ENCODE measurements at regions of chr3 and their contacts with region 1.

Region 1: GRCh38 chr3:133384331-133385027 is 15.4 kb upstream of the BFSP2 start:
- DNase-seq: peak; percentile 40 to 81
- ATAC-seq: peak; percentile 85 to 97 (median 92)
- H3K4me3 ChIP-seq: no peak overlapping the region
- H3K27ac ChIP-seq: no peak overlapping the region
- H3K4me1 ChIP-seq: peaks cover 7% of the 10 kb centered on the region
- H3K27me3 ChIP-seq: no peaks in the 10 kb centered on the region
- CTCF ChIP-seq: peak; percentile 82

Region 2: GRCh38 chr3:132722164-132723024 is 662.1 kb before region 1 on chr3 and contains the start of gene NPHP3:
- intact Hi-C with region 1: loop called in 1 of 2 experiments (anchors 2 kb)
- DNase-seq: peak; percentile 98 to 99
- ATAC-seq: peak; percentile 88 to 93 (median 92)
- H3K4me3 ChIP-seq: peak within 1 kb of the TSS; percentile 79
- H3K27ac ChIP-seq: peak within 1 kb of the TSS; percentile 91
- H3K4me1 ChIP-seq: peaks cover 30% of the 10 kb centered on the region
- H3K27me3 ChIP-seq: no peaks in the 10 kb centered on the region
- CTCF ChIP-seq: no peak
- total RNA-seq, gene NPHP3: 6.9 to 9.1 (median 8.1) TPM

Region 3: DNA sequence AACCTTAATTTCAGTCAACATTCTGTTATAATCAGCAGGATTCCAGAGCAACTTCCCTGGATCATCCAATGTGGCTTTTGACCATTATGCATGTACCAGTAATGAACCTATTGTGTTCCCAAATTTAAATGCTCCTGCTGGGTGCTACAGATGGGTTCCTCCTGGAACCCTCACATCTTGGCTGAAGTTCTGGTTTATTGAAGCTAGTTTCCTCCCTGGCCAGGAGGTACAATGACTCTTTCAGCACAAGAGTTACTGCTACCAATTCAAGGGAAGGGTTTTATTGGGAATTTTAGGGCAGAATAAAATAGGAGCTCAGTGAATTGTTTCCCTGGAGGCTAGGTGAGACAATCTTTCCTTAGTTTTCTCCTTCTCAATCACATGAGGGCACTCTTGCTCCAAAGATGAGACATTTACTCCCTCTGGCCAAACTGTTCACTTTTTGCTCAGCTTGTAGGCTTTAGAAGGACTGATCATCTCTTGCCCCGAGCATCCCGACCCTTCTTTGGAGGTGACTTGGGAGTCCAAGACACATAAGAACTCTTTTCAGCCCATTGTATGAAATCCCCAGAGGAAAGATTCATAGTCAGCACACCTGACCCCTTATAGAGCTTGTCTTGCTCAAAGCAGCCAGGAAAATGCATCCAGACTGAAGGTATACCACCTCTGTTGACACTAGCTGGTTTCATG is 653.4 kb before region 1 on chr3:
- intact Hi-C with region 1: loop called (anchors 2 kb)
- DNase-seq: no peak
- ATAC-seq: peak; percentile 69 to 91 (median 74)
- H3K4me3 ChIP-seq: no peak overlapping the region
- H3K27ac ChIP-seq: no peak overlapping the region
- H3K4me1 ChIP-seq: no peaks in the 10 kb centered on the region
- H3K27me3 ChIP-seq: no peaks in the 10 kb centered on the region
- CTCF ChIP-seq: peak; percentile 53

Region 4: DNA sequence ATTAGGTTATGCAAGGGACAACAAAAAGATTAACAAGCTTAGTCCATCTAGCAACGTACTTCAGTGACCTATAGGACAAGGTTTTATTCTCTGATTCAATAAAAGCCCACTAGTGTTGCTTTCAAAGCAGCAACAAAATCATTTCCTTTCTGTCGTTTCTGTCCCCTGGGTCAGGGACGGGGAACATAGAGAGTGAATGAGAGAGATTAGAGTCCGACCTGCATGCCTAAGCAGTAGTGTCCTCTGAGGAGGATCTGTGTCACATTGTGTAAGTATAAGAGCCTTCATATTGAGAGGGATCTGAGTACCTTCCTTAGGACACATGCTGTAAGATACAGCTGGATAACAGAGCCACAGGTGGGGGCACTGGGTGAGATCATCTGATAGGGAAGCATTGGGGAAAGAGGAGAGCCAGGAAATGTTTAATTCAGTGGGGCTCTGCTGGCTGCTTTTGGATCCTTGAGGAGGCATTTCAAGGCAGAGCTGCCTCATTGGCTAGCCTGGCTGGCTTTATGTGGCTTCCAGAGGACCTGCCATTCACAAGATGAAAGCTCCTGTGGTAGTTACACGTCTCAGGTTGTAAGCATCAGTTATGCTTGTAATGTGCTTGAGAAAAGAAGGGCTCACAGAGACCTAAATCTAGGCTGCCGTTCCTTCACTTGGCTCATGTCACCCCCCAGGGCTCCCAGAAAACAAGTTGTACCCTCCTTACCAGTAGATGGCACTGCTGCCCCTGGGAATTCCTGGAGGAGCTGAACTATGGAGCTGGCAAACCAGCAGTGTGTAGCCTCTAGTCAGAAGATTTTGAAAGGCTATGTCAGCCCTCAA is 343.6 kb before region 1 on chr3:
- intact Hi-C with region 1: loop called (anchors 2 kb)
- DNase-seq: peak; percentile 67 to 81
- ATAC-seq: peak; percentile 74 to 83 (median 80)
- H3K4me3 ChIP-seq: peak overlapping the region; percentile 19
- H3K27ac ChIP-seq: peak overlapping the region; percentile 44
- H3K4me1 ChIP-seq: peaks cover 9% of the 10 kb centered on the region
- H3K27me3 ChIP-seq: no peaks in the 10 kb centered on the region
- CTCF ChIP-seq: peak; percentile 76

Region 5: DNA sequence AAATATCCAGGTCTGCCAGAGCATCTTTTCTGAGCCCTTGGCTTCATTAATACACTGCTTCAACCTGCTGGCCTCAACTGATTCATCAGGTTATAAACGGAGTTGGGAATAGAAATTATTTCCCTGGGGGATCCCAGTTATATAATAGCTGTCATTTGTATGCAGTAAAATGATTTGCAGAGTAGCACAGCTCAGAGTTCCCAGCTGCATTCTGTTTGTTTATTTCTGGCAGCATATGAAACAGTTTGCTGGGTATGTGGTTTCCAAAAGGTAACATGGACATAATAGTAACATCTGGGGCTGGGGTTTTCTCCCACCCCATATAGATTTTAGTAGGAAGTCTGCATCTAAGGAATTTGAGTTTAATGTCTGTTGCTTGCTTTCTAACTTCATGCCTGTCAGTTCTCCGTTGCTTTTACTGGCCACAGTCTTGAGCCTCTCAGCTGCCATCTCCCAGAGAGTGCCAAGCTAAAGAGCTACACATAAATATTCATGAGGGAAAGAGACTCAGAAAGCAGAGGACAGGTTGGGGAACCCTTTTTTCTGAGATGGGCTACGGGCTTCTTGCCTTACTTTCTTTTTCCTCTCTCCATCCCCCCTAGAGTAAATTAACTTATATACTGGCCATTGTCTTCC is 221.7 kb before region 1 on chr3:
- intact Hi-C with region 1: no loop called
- DNase-seq: no peak
- ATAC-seq: no peak
- H3K4me3 ChIP-seq: no peak overlapping the region
- H3K27ac ChIP-seq: no peak overlapping the region
- H3K4me1 ChIP-seq: no peaks in the 10 kb centered on the region
- H3K27me3 ChIP-seq: no peaks in the 10 kb centered on the region
- CTCF ChIP-seq: no peak

Region 6: GRCh38 chr3:133329635-133330034 is 54.8 kb before region 1 on chr3:
- intact Hi-C with region 1: no loop called
- DNase-seq: no peak
- ATAC-seq: no peak
- H3K4me3 ChIP-seq: no peak overlapping the region
- H3K27ac ChIP-seq: no peak overlapping the region
- H3K4me1 ChIP-seq: no peaks in the 10 kb centered on the region
- H3K27me3 ChIP-seq: no peaks in the 10 kb centered on the region
- CTCF ChIP-seq: no peak

Region 7: DNA sequence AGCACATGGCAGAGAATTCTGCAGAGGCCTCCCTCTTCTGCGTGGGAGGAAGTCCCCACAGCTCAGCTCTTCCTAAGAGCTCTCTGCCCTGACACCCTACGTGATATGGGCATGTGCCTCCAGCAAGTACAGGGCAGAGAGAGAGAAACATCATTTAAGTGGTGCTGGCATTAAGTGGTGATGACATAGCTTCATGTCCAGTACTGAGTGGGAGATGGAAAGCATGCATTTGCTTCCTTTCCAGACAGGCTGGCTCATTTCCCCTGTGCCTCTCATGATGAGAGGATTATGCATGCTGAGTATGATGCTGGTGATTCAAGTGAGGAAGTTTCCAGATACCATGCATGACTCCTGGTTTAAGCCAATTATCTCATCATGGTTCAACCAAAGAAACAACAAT is 42.2 kb after region 1 on chr3:
- intact Hi-C with region 1: loop called in 1 of 2 experiments (anchors 5 kb)
- DNase-seq: no peak
- ATAC-seq: no peak
- H3K4me3 ChIP-seq: no peak overlapping the region
- H3K27ac ChIP-seq: no peak overlapping the region
- H3K4me1 ChIP-seq: no peaks in the 10 kb centered on the region
- H3K27me3 ChIP-seq: no peaks in the 10 kb centered on the region
- CTCF ChIP-seq: no peak

Region 8: DNA sequence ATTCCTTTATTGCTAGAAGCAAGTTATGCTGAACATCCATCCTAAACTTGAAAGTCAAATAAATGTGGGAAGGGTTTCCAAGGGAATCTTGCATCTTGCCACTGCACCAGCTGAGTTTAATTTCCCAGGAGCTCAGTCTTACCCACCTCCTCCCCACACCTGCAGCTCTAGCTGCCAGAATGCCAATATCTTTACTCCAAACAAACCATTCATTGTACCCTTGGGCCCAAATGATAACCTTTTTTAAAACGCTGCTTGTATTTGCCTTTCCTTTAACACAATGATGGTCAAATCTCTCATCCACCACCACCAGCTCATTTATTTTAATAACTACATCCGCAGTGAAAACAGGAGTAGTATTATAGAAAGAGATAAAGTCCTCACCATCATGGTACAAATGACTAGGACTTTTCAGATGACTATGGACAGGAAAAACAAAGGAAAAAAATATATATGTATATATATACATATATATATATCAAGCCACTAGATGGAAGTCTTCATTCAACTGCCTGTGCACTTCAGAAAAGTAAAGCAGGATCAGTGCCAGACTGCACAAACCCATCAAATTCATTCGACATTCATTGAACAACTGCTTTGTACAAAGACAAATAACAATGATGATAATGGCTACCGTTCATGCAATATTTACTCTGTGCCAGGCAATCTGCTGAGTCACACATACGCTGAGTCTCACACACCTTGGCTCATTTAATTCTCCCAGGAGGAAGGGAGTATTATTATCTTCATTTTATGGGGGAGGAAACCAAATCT is 59.4 kb after region 1 on chr3:
- intact Hi-C with region 1: no loop called
- DNase-seq: no peak
- ATAC-seq: no peak
- H3K4me3 ChIP-seq: no peak overlapping the region
- H3K27ac ChIP-seq: no peak overlapping the region
- H3K4me1 ChIP-seq: peaks cover 12% of the 10 kb centered on the region
- H3K27me3 ChIP-seq: no peaks in the 10 kb centered on the region
- CTCF ChIP-seq: no peak

Measured in psoas muscle (tissue), 8 donors.